SK-N-SH (cell line): ENCODE measurements at regions of chr7 and their contacts with region 1.

Region 1: DNA sequence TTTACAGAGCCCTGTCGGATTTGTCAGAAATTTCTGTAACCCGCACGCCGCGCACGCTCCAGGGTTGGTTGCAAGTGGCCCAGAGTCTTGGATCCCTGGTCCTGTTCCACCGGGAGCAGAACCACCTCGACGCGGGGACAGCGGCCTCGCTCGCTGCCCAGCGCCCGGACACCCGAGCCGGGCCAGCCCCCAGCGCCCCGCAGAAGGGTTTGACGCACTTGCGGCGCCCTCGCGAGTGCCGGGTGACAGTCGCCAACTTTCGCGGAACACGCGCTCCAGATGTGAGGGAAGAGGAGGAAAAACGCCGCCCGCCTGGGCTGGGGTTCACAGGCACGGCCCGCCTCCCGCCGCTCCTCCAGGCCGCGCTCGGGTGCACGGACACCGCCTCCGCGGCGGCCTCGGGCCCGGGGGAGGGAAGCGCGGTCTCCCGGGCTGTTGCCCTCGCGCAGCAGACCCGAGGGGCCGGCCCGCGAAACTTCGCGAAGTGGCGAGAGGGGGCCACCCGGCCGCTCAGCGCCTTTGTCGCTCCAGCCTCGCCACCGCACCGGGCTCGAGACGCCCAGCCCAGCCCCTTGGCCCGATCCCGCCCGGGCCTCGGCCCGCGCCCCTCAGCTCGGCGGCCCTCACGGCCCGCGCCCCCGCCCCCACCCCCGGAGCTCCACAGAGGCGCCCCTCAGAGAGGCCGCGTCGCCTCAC is 514 bp downstream of the RNF216 start:
- DNase-seq: peak; percentile 90
- H3K4me3 ChIP-seq: peak overlapping the region; percentile 66 to 84
- H3K27ac ChIP-seq: peak overlapping the region; percentile 83
- H3K4me1 ChIP-seq: peaks cover 5 to 6% of the 10 kb centered on the region in 2 experiments; a peak in 1 of 4 replicates
- H3K27me3 ChIP-seq: no peaks in the 10 kb centered on the region
- CTCF ChIP-seq: no peak
- EP300 ChIP-seq: no peak
- RAD21 ChIP-seq: no peak

Region 2: GRCh38 chr7:5766321-5766761 is 14.6 kb before region 1 on chr7:
- CTCF ChIA-PET with region 1: interaction called, 34 read pairs
- POLR2A ChIA-PET with region 1: no interaction called
- DNase-seq: no peak
- H3K4me3 ChIP-seq: no peak overlapping the region
- H3K27ac ChIP-seq: peak overlapping the region in 1 of 2 experiments; percentile 80; a peak in 2 of 4 replicates
- H3K4me1 ChIP-seq: peaks cover 0 to 34% of the 10 kb centered on the region in 2 experiments; a peak in 2 of 4 replicates
- H3K27me3 ChIP-seq: no peaks in the 10 kb centered on the region
- CTCF ChIP-seq: no peak
- EP300 ChIP-seq: peak in 1 of 2 experiments; percentile 7; a peak in 1 of 4 replicates
- RAD21 ChIP-seq: no peak

Region 3: DNA sequence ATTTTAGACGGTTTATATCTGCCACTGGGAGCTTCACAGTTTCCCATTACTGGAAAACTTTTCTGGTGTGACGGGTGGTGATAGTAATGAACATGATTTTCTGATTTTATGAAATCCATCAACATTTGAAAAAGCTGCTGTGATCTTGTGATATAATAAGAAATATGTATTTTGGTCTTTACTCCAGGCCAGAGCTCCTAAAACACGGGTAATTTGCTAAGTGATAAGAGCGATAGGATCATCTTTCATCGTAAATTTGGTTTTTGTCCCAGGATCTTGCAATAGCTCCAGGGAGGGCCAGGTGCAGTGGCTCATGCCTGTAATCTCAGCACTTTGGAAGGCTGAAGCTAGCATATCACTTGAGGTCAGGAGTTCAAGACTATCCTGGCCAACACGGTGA is 11.3 kb after region 1 on chr7:
- CTCF ChIA-PET with region 1: interaction called, 19 read pairs
- POLR2A ChIA-PET with region 1: interaction called, 3 read pairs
- DNase-seq: peak; percentile 66
- H3K4me3 ChIP-seq: no peak overlapping the region
- H3K27ac ChIP-seq: no peak overlapping the region
- H3K4me1 ChIP-seq: peaks cover 0 to 3% of the 10 kb centered on the region in 2 experiments; a peak in 1 of 4 replicates
- H3K27me3 ChIP-seq: no peaks in the 10 kb centered on the region
- CTCF ChIP-seq: no peak
- EP300 ChIP-seq: peak in 1 of 2 experiments; percentile 63; a peak in 1 of 4 replicates
- RAD21 ChIP-seq: no peak

Region 4: DNA sequence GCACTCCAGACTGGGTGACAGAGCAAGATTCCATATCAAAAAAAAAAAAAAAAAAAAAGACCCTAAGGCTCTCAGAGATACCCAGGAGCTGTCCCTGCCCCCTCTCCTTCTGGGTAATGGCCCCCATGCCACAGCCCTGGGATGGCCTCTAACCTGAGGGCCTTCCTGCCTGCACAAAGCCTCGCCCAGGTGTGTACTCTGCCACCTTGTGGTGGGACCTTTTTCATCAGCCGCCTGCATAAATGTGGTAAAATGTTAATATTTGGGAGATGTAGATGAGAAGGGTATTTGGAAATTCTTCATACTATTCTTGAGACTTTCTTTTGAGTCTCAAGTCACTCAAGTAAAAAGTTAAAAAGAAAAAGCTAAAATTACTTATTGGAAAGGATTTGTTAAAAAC is 46.8 kb after region 1 on chr7:
- CTCF ChIA-PET with region 1: interaction called, 10 read pairs
- POLR2A ChIA-PET with region 1: interaction called, 5 read pairs
- DNase-seq: peak; percentile 67
- H3K4me3 ChIP-seq: no peak overlapping the region
- H3K27ac ChIP-seq: no peak overlapping the region
- H3K4me1 ChIP-seq: peaks cover 0 to 7% of the 10 kb centered on the region in 2 experiments; a peak in 1 of 4 replicates
- H3K27me3 ChIP-seq: no peaks in the 10 kb centered on the region
- CTCF ChIP-seq: peak; percentile 64
- EP300 ChIP-seq: no peak
- RAD21 ChIP-seq: peak; percentile 60

Region 5: DNA sequence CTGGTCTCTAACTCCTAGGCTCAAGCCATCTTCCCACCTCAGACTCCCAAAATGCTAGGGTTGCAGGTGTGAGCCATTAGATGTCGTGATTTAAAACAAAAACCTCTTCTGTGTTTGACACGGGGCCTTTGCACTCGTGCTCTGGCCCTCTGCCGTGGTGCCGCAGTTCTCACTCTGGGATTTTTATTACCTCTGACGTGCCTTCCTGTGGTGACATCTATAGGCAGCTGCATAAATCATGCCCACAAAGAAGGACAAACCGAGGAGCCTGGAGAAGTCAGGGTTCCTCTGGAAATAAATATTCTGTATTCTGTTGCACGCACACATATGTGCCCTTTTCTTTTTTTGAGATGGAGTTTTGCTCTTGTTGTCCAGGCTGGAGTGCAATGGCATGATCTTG is 73.8 kb after region 1 on chr7:
- CTCF ChIA-PET with region 1: no interaction called
- POLR2A ChIA-PET with region 1: no interaction called
- DNase-seq: no peak
- H3K4me3 ChIP-seq: no peak overlapping the region
- H3K27ac ChIP-seq: no peak overlapping the region
- H3K4me1 ChIP-seq: no peaks in the 10 kb centered on the region
- H3K27me3 ChIP-seq: no peaks in the 10 kb centered on the region
- CTCF ChIP-seq: no peak
- EP300 ChIP-seq: no peak
- RAD21 ChIP-seq: no peak